ENCODE measurements at regions of chr2 and their contacts with region 1.

Region 1: DNA sequence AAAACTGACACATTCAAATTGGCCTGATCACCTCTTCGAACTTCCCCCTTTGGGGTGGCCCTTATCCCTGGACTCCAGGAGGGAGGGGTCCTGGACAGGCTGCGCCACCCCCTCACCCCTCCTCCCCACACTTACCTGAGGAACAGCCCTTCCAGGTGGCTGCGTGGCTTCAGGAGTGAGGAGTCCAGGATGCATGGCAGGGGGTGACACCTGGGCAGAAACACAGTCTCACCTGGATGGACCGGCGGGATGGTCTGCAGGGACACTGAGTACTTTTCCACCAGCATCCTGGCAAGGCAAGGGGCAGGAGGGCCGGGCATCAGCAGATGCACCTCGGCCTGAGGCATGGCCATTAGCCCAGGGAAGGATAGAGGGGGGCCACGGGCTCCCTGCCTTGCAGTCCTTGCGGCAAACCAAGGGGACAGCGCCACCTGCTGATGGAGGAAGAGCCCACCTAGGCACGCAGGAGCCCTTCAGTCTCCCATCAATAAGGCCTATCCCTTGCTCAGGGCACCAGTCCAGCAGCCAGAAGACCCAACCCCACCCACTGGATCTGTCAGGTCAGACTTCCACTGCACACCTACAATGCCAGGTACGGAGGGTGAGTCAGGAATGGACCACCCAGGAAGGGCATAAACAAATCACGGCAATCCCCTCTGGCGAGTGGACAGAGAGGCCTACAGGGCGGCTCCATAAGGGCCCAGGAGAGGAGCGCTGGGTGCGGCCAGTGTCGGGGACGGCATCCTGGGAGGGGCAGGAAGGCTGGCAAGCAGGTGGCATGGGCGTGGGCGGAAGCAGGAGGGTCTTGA is 26.0 kb downstream of the FAM178B start:
- DNase-seq: peak; percentile 91 to 97 (median 95)
- ATAC-seq: peak; percentile 95 to 96
- H3K4me3 ChIP-seq: no peak overlapping the region
- H3K27ac ChIP-seq: no peak overlapping the region
- H3K4me1 ChIP-seq: no peaks in the 10 kb centered on the region
- H3K27me3 ChIP-seq: no peaks in the 10 kb centered on the region

Region 2: DNA sequence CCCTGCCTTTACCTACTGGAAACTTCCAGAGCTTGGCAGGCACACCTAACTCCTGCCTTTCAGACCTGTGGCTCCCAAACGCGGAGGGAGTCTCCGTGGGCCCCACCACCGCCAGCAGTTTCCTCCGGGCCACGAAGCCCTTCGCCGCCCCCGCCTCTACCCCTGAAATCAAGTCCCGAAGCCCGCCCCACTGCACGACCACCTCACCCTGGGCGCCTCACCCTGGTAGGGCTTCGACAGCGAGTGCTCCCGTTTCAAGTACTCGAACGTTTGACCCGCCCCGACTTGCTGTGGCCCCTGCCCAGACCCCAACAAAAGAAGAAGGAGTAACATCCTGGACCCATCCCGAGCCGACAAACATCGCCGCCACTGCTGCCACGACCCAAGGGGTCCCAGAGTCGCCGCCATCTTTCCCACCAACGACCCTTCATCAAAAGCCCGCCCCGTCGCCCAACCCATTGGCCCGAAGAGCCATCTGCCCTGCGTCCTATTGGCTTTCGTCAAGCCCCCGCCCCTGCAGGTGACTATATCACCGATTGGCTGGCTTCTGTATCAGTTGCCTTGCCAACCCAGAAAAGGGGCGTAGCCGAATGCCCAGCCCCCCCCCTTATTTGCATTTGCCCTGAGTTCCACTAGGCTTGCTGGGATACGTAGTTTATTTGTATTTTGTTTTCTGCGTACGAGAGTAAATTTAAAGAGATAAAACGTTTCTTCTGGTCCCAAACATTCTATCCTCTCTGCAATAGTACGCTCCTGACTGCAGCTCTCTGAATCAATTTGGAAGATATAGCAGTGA is 220.5 kb before region 1 on chr2 and contains the start of gene LMAN2L:
- intact Hi-C with region 1: loop called in 1 of 4 experiments (anchors 10 kb)
- DNase-seq: peak; percentile 98 to 99 (median 98)
- ATAC-seq: peak; percentile 98 to 100
- H3K4me3 ChIP-seq: peak within 1 kb of the TSS; percentile 81
- H3K27ac ChIP-seq: peak within 1 kb of the TSS; percentile 37
- H3K4me1 ChIP-seq: peaks cover 2% of the 10 kb centered on the region
- H3K27me3 ChIP-seq: no peaks in the 10 kb centered on the region
- total RNA-seq, gene LMAN2L: 12.9 to 24.3 (median 19.9) TPM

Region 3: GRCh38 chr2:97210325-97210724 is 250.0 kb after region 1 on chr2:
- intact Hi-C with region 1: no loop called
- DNase-seq: no peak
- ATAC-seq: no peak
- H3K4me3 ChIP-seq: no peak overlapping the region
- H3K27ac ChIP-seq: no peak overlapping the region
- H3K4me1 ChIP-seq: no peaks in the 10 kb centered on the region
- H3K27me3 ChIP-seq: no peaks in the 10 kb centered on the region

Measured in right cardiac atrium (tissue), 5 donors.